Activated T-helper 2 cell treated with anti-CD3 and anti-CD28 coated beads, Interferon-gamma antibody, Interleukin-2, Interleukin-4, amounts not matched to agents 10 μg/mL and 5 μg/mL and 100 μg/mL, durations not matched to agents 14 hours and 24 hours and 36 hours (primary cell): ENCODE measurements at regions of chr2 and their contacts with region 1.

Region 1: DNA sequence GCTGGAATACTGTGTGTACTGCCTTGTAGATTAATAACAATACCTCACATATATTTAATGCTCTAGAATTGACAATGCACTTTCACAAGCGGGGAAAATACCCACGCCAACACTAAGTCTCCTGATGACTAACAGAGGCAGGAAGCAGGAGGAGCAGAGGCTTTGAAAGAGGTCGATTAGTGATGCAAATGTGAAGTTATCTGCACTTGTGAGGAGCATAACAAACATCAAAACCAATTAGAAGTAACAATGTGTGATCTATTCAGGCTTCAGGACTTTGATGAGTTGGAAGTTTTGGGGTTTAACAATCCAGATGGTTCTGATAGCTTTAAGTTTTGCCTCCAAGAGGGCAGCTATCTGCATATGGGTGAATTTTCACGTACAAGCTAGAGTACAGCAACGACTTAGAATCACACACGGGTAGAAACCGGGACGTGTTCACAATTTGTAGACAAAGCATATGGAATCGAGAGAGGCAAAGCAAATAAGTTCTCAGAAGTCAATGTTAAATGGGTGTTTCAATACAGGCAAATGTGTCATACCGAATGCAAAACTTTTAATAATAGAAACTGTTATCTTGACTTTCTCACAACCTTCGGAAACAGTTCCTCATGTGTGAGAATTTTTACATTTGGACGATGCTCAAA is 114.5 kb downstream of the METTL8 start:
- DNase-seq: peak; percentile 32
- H3K4me3 Mint-ChIP-seq: peak overlapping the region; percentile 56
- H3K27ac Mint-ChIP-seq: peak overlapping the region; percentile 99
- H3K4me1 Mint-ChIP-seq: peaks cover 56% of the 10 kb centered on the region
- H3K27me3 Mint-ChIP-seq: no peaks in the 10 kb centered on the region

Region 2: DNA sequence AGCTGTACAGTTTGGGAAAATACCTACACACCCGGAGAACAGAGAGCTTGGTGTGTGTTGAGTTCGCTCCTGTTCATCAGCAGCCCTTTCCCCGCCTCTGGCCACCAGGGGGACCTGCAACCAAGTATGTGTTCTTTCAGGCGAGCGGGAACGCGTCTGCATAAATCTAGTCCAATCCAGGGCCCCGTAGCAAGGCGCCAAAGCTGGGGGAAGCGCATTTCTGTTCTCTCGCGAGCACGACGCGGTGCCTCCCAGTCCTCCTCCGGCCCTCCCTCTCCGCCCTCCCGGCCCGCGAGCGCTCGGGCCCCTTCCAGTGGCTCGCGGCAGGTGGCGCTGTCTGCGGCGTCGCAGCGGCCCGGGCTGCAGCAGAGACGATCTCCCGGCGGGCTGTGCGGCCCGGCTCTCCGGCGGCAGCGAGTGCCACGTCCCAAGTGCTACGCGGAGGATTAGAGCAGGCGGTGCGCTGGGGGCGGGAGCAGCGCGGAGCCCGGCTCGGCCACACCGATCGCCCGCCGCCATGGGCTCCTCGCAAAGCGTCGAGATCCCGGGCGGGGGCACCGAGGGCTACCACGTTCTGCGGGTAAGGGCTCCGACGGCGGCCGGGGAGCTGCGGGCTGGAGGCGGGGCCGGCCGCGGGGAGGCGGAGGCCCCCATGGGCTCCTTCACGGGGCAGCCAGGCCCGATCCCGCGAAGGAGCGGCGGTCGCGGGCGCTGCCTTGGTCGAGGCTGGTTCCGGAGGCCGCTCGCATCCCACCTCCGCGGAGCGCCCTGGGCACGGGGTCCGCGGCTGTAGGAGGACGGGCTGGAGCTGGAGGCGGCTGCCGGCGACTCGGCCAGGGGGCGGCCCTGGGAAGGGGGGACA is 390.2 kb before region 1 on chr2 and contains the start of gene GORASP2:
- intact Hi-C with region 1: loop called (anchors 2 kb)
- DNase-seq: peak; percentile 98
- H3K4me3 Mint-ChIP-seq: peak within 1 kb of the TSS; percentile 92
- H3K27ac Mint-ChIP-seq: peak within 1 kb of the TSS; percentile 94
- H3K4me1 Mint-ChIP-seq: peaks cover 45% of the 10 kb centered on the region
- H3K27me3 Mint-ChIP-seq: no peaks in the 10 kb centered on the region
- total RNA-seq, gene GORASP2: 92.4 and 92.8 TPM in 2 replicates

Region 3: DNA sequence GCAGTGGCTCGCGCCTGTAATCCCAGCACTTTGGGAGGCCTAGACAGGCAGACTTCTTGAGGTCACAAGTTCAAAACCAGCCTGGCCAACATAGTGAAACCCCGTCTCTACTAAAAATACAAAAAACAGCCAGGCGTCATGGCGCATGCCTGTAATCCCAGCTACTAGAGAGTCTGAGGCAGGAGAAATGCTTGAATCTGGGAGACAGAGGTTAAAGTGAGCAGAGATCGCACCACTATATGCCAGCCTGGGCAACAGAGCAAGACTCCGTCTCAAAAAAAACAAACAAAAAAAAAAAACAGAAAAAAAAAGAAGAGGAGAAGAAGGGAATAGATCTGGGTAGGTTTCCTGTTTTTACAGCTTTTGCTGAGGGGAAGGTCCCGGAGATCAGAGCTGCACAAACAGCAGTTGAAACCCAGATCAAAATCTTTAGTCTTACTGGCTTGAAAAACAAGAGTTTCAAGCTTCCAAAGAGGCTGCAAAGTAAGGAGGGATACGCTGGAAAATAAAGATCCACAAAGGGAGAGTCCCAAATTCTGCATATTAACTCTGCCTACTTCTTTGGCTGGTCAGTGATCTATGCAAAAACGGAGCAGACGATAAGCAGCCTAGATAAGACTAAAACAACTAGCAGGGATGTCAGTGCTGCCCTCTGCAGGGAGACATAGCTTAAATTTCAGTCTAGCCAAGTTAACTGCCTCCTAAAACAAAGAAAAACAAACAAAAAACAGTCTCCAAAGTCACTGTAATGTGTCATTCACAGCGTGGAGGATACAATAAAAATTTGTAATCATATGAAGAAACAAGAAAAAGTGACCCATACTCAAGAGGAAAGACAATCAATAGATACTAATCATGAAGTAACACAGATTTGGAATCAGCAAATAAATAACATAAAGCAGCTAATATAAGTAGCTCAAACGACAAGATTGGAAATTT is 232.7 kb before region 1 on chr2:
- intact Hi-C with region 1: loop called (anchors 2 kb)
- DNase-seq: peak; percentile 33
- H3K4me3 Mint-ChIP-seq: peak overlapping the region; percentile 78
- H3K27ac Mint-ChIP-seq: peak overlapping the region; percentile 69
- H3K4me1 Mint-ChIP-seq: peaks cover 61% of the 10 kb centered on the region
- H3K27me3 Mint-ChIP-seq: no peaks in the 10 kb centered on the region

Region 4: DNA sequence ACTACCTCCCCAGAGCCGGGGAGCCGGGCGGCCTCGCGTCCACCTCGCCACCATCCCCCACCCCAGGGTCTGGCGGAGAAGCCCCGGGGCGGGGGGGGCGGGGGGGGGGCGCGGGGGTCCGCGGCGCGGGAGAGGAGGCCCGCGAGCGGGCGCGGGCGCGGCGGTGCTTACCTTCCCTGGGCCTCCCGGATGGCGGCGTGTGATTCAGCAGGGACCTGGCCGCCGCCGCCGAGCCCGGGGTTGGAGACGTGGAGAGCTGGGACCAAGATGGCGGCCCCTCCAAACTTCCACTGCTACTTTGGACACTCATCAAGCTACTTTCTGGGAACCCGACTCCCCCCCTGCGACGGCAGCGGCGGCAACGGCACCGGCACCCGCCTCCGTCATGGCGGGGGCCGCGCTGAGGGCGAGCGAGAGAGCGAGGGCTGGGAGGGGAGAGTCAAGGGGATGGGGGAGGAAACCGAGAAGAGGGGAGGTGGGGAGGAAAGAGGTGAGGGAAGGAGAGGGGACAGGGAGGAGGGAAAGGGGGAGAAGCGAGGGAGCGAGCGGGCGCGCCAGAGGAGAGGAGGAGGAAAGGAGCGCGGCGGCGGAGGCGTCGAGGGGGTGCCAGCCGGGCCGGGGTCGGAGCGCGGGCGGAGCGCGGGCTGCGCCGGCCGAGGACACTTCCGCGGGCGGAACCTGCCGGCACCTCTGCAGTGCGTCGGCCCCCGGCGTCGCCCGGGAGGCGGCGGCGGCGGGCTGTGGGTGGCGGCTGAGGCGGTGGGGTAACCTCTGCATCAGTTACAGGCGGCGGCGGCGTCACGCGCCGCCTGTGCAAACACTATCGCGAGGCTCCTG is 158.9 kb before region 1 on chr2 and contains the start of gene TLK1:
- intact Hi-C with region 1: loop called (anchors 1 kb)
- DNase-seq: peak; percentile 75
- H3K4me3 Mint-ChIP-seq: peak within 1 kb of the TSS; percentile 98
- H3K27ac Mint-ChIP-seq: peak within 1 kb of the TSS; percentile 95
- H3K4me1 Mint-ChIP-seq: peaks cover 60% of the 10 kb centered on the region
- H3K27me3 Mint-ChIP-seq: no peaks in the 10 kb centered on the region
- total RNA-seq, gene TLK1: 81.7 and 86.1 TPM in 2 replicates

Region 5: DNA sequence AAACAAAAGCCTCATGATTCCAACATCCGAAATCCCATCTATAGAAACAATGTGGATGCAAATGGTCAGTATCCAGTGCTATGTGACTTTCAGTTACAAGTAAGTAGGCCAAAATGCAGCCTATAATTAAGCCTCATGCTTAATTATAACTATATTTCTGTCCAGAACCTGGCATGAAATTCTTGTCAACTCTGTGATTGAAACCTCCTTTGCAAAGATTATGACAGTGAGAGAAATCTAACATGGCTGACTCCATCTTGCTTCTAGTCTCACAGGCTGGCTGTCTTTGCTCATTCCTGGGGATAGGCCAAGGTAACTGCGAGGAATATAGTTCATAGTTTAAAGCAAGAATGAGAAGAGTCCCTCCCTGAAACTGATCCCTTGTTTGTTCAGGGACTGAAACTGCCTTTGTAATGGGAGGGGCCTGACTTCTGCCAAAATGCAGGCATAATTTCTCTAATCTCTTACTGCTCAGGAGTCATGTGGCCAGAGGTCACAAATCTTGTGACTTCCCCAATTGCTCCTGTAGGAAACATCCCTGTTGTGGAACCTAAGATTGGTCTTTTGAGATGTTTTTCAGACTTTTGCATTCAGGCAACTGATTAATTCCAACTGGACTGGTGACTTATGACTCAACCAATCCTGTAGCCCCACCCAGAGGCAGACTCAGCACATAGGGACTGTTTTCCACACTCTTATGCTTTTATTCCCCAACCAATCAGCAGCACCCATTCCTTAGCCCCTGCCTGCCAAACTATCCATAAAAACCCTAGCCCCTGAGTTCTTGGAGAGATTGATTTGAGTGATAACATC is 74.1 kb before region 1 on chr2:
- intact Hi-C with region 1: loop called (anchors 5 kb)
- DNase-seq: no peak
- H3K4me3 Mint-ChIP-seq: no peak overlapping the region
- H3K27ac Mint-ChIP-seq: no peak overlapping the region
- H3K4me1 Mint-ChIP-seq: peaks cover 40% of the 10 kb centered on the region
- H3K27me3 Mint-ChIP-seq: peaks cover 3% of the 10 kb centered on the region

Region 6: GRCh38 chr2:171390941-171391516 is 71.7 kb after region 1 on chr2:
- intact Hi-C with region 1: loop called (anchors 1 kb)
- DNase-seq: peak; percentile 22
- H3K4me3 Mint-ChIP-seq: no peak overlapping the region
- H3K27ac Mint-ChIP-seq: peak overlapping the region; percentile 77
- H3K4me1 Mint-ChIP-seq: peaks cover 39% of the 10 kb centered on the region
- H3K27me3 Mint-ChIP-seq: no peaks in the 10 kb centered on the region